ENCODE measurements at regions of chr6 and their contacts with region 1.

Region 1: DNA sequence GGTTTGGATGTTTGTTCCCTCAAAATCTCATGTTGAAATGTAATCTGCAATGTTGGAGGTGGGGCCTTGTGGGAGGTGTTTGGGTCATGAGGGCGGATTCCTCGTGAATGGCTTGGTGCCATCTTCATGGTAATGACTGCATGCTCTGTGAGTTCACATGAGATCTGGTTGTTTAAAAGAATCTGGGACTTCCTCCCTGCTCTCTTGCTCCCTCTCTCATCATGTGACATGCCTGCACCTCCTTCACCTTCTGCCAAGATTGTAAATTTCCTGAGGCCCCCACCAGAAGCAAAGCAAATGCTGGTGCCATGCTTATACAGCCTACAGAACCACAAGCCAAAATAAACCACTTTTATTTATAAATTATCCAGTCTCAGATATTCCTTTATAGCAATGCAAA is 250.3 kb upstream of the PLN start:
- DNase-seq: peak in 1 of 2 donors; percentile 69
- H3K4me3 ChIP-seq: no peak overlapping the region
- H3K27ac ChIP-seq: peak overlapping the region; percentile 62 to 89
- H3K4me1 ChIP-seq: peaks cover 14 to 46% of the 10 kb centered on the region in 2 donors
- H3K27me3 ChIP-seq: no peaks in the 10 kb centered on the region
- CTCF ChIP-seq: no peak

Region 2: GRCh38 chr6:118249680-118250079 is 48.1 kb before region 1 on chr6:
- intact Hi-C with region 1: no loop called
- DNase-seq: no peak
- H3K4me3 ChIP-seq: no peak overlapping the region
- H3K27ac ChIP-seq: no peak overlapping the region
- H3K4me1 ChIP-seq: no peaks in the 10 kb centered on the region
- H3K27me3 ChIP-seq: no peaks in the 10 kb centered on the region
- CTCF ChIP-seq: no peak

Region 3: DNA sequence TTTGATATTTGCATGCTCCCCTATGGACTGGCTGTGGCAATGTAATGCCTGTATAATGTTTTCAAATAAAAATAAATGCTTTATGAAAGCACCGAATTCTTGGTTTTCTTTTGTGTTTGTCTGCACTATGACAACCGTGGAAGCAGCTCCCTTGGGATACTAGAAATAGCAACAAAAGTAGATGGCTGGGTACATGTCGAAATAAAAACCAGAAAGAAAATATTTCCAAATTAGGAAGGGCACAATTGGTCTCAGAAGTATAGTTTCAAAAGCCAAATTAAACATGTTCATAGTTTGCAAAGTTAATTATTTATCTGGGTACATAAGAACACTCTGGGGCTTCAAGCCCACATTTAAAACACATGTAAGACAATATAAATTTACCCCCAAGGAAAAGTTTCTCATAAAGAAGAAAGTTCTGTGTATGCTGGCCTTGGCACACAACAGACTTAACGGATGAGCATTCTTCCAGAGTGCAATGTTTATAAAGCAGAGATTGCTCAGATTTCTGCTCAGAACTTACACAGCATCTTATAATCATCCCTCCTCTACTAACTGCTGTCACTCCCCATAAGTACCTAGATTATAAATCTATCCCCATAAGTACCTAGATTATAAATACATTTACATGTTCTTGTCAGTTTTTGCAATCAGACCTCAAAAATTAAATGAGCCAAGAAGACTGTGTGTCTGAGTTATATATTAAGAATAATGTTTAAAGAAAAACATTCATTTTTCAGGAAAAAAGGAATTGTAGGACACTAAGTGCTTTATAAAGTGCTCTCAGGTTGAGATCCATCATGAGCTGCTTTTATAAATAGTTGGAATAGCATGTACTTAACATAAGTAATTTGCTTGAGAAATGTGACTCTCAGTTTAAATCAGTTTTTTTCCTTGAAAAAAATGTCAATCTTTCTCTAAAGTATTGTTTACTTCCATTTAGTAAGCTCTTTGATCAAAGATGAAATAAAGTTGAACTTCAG is 20.1 kb after region 1 on chr6:
- intact Hi-C with region 1: loop called (anchors 1 kb)
- DNase-seq: peak in 1 of 2 donors; percentile 65
- H3K4me3 ChIP-seq: peak overlapping the region; percentile 13 to 23
- H3K27ac ChIP-seq: peak overlapping the region; percentile 83 to 91
- H3K4me1 ChIP-seq: peaks cover 5 to 62% of the 10 kb centered on the region in 2 donors
- H3K27me3 ChIP-seq: no peaks in the 10 kb centered on the region
- CTCF ChIP-seq: no peak

Region 4: DNA sequence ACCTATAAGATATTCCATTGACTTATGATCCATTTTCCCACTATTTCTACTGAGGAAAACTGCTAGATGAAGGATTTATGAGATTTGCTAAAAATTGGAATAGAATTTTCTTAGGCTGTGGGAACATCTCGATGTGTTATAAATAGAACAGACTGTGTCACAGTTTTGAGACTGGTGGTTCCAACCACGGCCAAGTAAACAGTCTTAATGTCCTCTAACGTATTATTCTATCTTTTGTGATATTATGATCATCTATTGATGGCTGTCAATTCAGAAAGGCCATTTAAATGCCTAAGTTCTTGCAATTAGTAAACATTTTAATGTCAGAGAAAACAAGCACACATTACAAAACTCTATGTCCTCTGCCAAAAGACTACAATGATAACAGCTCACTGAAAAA is 178.7 kb after region 1 on chr6:
- intact Hi-C with region 1: no loop called
- DNase-seq: no peak
- H3K4me3 ChIP-seq: peak overlapping the region in 1 of 2 donors; percentile 21
- H3K27ac ChIP-seq: peak overlapping the region; percentile 5 to 51
- H3K4me1 ChIP-seq: peaks cover 0 to 7% of the 10 kb centered on the region in 2 donors
- H3K27me3 ChIP-seq: no peaks in the 10 kb centered on the region
- CTCF ChIP-seq: no peak